Breast epithelium (tissue), 4 donors: ENCODE measurements at regions of chr16 and their contacts with region 1.

Region 1: GRCh38 chr16:59090541-59090940 is 356.4 kb upstream of the GOT2 start:
- DNase-seq: no peak
- H3K4me3 ChIP-seq: no peak overlapping the region
- H3K27ac ChIP-seq: no peak overlapping the region
- H3K4me1 ChIP-seq: no peaks in the 10 kb centered on the region
- H3K27me3 ChIP-seq: no peaks in the 10 kb centered on the region
- CTCF ChIP-seq: no peak
- POLR2A ChIP-seq: no peak

Region 2: GRCh38 chr16:59400830-59401229 is 310.3 kb after region 1 on chr16:
- intact Hi-C with region 1: loop called (anchors 5 kb)
- DNase-seq: no peak
- H3K4me3 ChIP-seq: no peak overlapping the region
- H3K27ac ChIP-seq: no peak overlapping the region
- H3K4me1 ChIP-seq: no peaks in the 10 kb centered on the region
- H3K27me3 ChIP-seq: no peaks in the 10 kb centered on the region
- CTCF ChIP-seq: no peak
- POLR2A ChIP-seq: no peak